ENCODE measurements at regions of chr22 and their contacts with region 1.

Region 1: DNA sequence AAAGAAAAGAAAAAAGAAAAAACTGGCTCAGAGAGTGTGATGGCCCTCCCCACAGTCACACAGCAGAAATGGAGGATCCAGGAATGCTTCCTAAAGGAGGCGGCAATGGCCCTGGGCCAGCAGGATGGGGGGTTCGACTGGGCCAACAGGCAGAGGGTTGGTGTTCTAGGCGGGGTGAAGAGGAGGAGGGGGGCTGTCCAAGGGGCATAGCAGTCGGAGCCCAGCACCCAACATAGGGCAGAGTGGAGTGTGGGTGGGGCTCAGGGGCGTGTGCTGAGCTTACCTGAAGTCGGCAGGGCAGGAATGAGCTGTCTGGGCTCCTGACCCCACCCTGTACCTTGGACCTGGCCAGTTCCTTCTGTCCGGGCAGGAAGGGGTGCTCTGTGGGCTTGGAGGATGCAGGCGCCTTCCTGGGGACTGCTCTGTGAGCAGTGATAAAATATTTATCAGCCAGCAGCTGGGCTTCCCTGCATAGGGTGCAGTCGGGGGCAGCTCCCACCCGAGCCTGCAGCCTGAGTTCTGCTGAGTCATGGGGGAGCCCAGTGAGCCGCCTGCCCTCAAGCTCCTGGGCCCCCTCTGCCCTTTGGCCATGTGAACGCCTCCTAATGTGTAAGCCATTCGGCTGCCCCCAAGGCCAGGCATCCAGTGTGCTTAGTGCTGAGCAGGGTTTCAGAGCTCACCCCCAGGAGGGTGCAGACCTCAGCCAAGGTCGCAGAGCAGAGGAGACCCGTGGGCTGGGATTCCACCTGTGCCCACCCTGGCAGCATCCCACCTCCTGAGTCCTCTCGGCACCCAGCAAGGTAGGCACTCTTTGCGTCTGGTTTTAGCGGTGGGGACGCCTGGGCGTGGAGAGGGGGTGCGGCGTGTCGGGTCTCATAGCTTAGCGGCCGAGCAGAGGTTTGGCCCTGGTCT is 25.3 kb upstream of the PRR5 start:
- DNase-seq: peak; percentile 97 to 100 (median 99)
- H3K4me3 ChIP-seq: peak overlapping the region; percentile 3 to 71 (median 64)
- H3K27ac ChIP-seq: peak overlapping the region; percentile 64 to 78
- H3K4me1 ChIP-seq: peaks cover 0 to 63% (median 50%) of the 10 kb centered on the region in 4 experiments
- H3K27me3 ChIP-seq: no peaks in the 10 kb centered on the region

Region 2: GRCh38 chr22:44608597-44609399 is 67.9 kb before region 1 on chr22:
- CTCF ChIA-PET with region 1: no interaction called
- POLR2A ChIA-PET with region 1: no interaction called
- DNase-seq: no peak
- H3K4me3 ChIP-seq: no peak overlapping the region
- H3K27ac ChIP-seq: no peak overlapping the region
- H3K4me1 ChIP-seq: peaks cover 0 to 15% (median 8%) of the 10 kb centered on the region in 4 experiments
- H3K27me3 ChIP-seq: peaks cover 0 to 3% (median 0%) of the 10 kb centered on the region in 5 experiments

Region 3: GRCh38 chr22:44664149-44664548 is 12.5 kb before region 1 on chr22:
- CTCF ChIA-PET with region 1: interaction called, 12 read pairs
- POLR2A ChIA-PET with region 1: interaction called, 4 read pairs
- DNase-seq: peak; percentile 75 to 93 (median 89)
- H3K4me3 ChIP-seq: peak overlapping the region in 1 of 7 experiments; percentile 7
- H3K27ac ChIP-seq: peak overlapping the region; percentile 18 to 59
- H3K4me1 ChIP-seq: peaks cover 2 to 61% (median 54%) of the 10 kb centered on the region in 4 experiments
- H3K27me3 ChIP-seq: no peaks in the 10 kb centered on the region

Region 4: DNA sequence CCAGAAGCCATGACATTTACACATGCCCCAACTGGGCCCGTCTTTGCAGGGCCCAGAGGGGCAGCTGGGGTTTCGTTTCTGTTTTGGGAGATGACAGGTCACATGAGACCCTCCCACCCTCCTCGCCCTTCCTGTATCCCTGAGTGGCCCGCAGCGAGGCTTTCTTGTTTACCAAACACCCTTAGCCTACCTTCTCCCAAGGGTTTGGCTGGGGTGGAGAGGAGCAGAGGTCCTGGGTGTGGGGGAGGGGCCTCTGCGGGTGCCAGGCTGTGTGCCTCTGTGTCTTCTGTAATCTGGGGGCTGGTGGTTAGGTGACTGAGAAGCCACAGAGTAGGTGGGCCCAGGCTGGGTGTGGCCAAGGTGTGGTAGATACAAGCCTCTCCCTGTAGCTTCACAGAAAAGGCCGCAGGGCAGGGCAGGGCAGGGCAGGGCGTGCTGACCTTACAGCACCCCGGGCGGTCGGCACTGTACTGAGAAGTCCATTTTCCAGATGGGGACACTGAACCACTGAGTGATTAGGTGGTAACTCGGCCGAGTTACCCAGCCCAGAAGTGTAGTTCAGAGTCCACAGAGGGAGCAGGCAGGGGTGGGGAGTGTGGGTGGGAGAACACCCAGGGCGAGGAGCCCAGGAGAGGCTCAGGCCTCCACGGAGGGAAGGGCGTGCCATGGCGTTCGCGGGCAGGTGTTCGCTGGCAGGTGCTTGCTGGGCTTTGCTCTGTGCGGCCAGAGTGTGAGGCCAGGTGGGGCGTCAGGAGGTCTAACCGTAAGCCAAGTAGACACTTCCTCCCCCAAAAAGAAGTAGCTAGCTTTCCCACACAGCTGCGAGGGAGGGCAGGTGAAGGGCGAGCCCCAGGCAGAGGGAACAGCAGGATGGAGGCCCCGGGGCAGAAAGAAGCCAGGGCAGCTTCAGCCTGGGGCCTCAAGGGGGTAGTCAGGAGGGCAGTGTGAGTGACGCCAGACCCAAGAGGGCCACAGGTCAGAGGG is 34.1 kb after region 1 on chr22:
- CTCF ChIA-PET with region 1: no interaction called
- POLR2A ChIA-PET with region 1: no interaction called
- DNase-seq: peak in 2 of 3 donors; percentile 37 to 42
- H3K4me3 ChIP-seq: peak overlapping the region in 1 of 7 experiments; percentile 13
- H3K27ac ChIP-seq: no peak overlapping the region
- H3K4me1 ChIP-seq: peaks cover 0 to 28% (median 23%) of the 10 kb centered on the region in 4 experiments
- H3K27me3 ChIP-seq: no peaks in the 10 kb centered on the region

Region 5: GRCh38 chr22:44828193-44828592 is 151.5 kb after region 1 on chr22:
- CTCF ChIA-PET with region 1: no interaction called
- POLR2A ChIA-PET with region 1: no interaction called
- DNase-seq: peak; percentile 13 to 24 (median 18)
- H3K4me3 ChIP-seq: no peak overlapping the region
- H3K27ac ChIP-seq: no peak overlapping the region
- H3K4me1 ChIP-seq: no peaks in the 10 kb centered on the region
- H3K27me3 ChIP-seq: no peaks in the 10 kb centered on the region

Measured in common myeloid progenitor, CD34-positive (primary cell).